Pancreas (tissue), 10 donors: ENCODE measurements at regions of chr2 and their contacts with region 1.

Region 1: GRCh38 chr2:169528271-169528701 is 18.8 kb downstream of the KLHL41 start:
- DNase-seq: peak; percentile 16 to 84 (median 56)
- ATAC-seq: peak; percentile 72 to 89 (median 86)
- H3K4me3 ChIP-seq: no peak overlapping the region
- H3K27ac ChIP-seq: no peak overlapping the region
- H3K4me1 ChIP-seq: no peaks in the 10 kb centered on the region
- H3K27me3 ChIP-seq: no peaks in the 10 kb centered on the region
- CTCF ChIP-seq: peak; percentile 66 to 83 (median 74)

Region 2: DNA sequence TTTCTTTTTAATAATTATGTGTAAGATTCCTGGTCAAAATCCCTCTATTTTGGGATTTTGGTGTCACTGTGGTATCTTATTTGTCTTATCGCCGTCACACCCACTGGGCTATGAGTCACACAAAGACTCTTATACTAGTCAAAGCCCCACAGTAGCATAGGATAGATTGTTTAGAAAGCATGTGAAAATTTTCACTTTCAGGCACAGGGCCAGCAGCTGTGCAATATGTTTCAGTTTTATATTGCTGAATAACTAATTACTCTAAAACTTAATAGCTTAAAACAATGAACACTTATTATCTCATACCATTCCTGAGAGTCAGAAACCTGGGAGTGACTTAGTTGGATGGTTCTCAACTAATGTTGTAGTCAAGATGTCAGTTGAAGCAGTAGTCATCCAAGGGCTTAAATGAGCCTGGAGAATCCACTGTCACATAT is 141.9 kb after region 1 on chr2:
- intact Hi-C with region 1: loop called in 1 of 3 experiments (anchors 10 kb)
- DNase-seq: no peak
- ATAC-seq: no peak
- H3K4me3 ChIP-seq: no peak overlapping the region
- H3K27ac ChIP-seq: no peak overlapping the region
- H3K4me1 ChIP-seq: no peaks in the 10 kb centered on the region
- H3K27me3 ChIP-seq: no peaks in the 10 kb centered on the region
- CTCF ChIP-seq: no peak

Region 3: DNA sequence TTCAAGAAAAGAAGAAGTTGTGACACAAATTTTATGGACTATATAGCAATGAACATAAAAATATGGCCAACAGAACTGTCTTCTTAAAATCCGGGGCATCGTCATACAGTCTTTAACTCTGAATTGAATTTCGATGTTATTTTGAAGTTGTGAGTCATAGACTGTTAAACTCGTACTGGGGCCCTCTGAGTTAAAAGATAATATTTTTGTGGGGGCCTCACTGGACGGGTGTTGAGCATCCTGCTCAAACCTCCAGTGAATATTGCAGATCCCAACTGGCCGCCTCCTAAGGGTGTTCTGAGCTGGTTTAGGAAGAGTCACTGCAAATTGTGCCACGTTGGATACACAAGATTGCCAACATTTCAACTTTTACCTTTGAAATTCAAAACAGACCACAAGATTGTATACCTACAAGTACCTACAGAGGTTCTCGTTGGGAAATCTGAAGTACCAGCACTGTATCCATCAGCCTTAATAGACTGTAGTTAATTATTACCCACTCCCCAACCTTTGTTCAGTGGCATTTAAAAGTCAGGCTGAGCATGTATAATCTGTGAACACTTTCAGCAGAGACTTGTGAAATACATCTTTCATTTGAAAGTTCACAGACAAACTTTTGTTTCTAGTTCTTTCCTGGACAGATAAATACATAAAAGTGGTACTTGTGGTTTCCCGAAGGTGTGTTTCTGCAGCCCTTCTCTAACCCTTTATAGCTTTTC is 233.1 kb after region 1 on chr2:
- intact Hi-C with region 1: no loop called
- DNase-seq: no peak
- ATAC-seq: peak in 3 of 4 donors; percentile 79 to 89 (median 79)
- H3K4me3 ChIP-seq: no peak overlapping the region
- H3K27ac ChIP-seq: peak overlapping the region in 1 of 4 donors; percentile 17
- H3K4me1 ChIP-seq: peaks cover 0 to 6% (median 0%) of the 10 kb centered on the region in 3 donors
- H3K27me3 ChIP-seq: no peaks in the 10 kb centered on the region
- CTCF ChIP-seq: no peak